CD8-positive, alpha-beta T cell (primary cell): ENCODE measurements at regions of chr17 and their contacts with region 1.

Region 1: DNA sequence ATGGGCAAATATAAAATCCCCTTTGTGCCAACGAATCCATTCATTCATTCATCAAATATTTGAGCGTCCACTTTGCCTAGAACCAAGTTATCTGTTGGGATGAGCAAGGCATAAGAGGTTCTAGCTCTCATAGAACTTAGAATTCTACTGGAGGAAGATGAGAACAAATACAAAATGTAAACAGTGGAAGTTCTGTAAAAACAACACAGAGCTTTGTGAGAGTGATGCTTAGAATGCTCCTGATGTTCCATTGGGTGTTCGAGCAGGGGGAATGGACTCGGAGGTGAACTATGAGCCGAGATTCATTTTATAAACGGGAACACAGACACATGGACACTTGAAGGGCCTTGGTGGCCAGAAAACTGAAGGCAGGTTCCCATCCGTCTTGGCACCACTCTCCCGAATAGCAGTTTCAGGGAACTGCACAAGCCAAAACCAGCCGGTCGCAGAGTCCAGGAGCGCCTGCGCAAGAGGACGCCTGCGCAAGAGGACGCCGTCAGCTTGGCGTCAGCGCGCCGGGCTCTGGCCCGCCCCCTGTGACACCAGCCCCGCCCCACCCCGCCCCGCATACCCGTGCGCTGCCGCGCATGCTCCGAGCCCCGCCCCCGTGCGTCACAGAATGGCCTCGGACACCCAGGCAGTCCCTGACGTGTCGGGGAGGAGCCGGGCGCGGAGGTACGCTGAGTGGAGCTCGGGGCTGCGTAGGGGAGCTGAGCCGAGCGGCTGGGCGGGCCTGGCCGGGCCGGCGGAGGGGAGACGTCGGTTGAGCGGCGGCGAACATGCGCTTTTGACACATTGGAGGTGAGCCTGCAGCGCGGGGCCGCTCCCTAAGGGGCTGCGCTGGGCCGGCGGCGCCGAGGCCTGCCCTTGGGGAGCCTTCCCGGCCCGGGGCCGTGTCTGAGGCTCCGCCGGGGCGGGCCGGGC is at the start of gene NDEL1:
- DNase-seq: peak; percentile 99
- ATAC-seq: peak; percentile 92
- H3K4me3 ChIP-seq: peak within 1 kb of the TSS; percentile 86 to 92
- H3K4me3 Mint-ChIP-seq: peak within 1 kb of the TSS; percentile 98
- H3K27ac ChIP-seq: peak within 1 kb of the TSS; percentile 98 to 100
- H3K27ac Mint-ChIP-seq: peak within 1 kb of the TSS; percentile 97
- H3K4me1 ChIP-seq: peaks cover 34% of the 10 kb centered on the region
- H3K4me1 Mint-ChIP-seq: peaks cover 42% of the 10 kb centered on the region
- H3K27me3 ChIP-seq: no peaks in the 10 kb centered on the region
- H3K27me3 Mint-ChIP-seq: no peaks in the 10 kb centered on the region
- CTCF ChIP-seq: no peak
- total RNA-seq, gene NDEL1: 266 to 279 TPM

Region 2: GRCh38 chr17:6651357-6651918 is 1784.1 kb before region 1 on chr17 and contains the starts of genes C17orf100 and MED31:
- CTCF ChIA-PET with region 1: no interaction called
- POLR2A ChIA-PET with region 1: no interaction called
- intact Hi-C with region 1: loop called in 1 of 2 experiments (anchors 5 kb)
- DNase-seq: peak; percentile 90 to 97 (median 94)
- ATAC-seq: peak; percentile 88
- H3K4me3 ChIP-seq: peak within 1 kb of the TSS; percentile 84 to 86
- H3K4me3 Mint-ChIP-seq: peak within 1 kb of the TSS; percentile 97
- H3K27ac ChIP-seq: peak within 1 kb of the TSS; percentile 99 to 100
- H3K27ac Mint-ChIP-seq: peak within 1 kb of the TSS; percentile 100
- H3K4me1 ChIP-seq: peaks cover 23% of the 10 kb centered on the region
- H3K4me1 Mint-ChIP-seq: peaks cover 69% of the 10 kb centered on the region
- H3K27me3 ChIP-seq: no peaks in the 10 kb centered on the region
- H3K27me3 Mint-ChIP-seq: no peaks in the 10 kb centered on the region
- CTCF ChIP-seq: no peak
- total RNA-seq, gene C17orf100: 0.39 to 0.73 TPM
- total RNA-seq, gene MED31: 21.4 to 25.6 TPM

Region 3: DNA sequence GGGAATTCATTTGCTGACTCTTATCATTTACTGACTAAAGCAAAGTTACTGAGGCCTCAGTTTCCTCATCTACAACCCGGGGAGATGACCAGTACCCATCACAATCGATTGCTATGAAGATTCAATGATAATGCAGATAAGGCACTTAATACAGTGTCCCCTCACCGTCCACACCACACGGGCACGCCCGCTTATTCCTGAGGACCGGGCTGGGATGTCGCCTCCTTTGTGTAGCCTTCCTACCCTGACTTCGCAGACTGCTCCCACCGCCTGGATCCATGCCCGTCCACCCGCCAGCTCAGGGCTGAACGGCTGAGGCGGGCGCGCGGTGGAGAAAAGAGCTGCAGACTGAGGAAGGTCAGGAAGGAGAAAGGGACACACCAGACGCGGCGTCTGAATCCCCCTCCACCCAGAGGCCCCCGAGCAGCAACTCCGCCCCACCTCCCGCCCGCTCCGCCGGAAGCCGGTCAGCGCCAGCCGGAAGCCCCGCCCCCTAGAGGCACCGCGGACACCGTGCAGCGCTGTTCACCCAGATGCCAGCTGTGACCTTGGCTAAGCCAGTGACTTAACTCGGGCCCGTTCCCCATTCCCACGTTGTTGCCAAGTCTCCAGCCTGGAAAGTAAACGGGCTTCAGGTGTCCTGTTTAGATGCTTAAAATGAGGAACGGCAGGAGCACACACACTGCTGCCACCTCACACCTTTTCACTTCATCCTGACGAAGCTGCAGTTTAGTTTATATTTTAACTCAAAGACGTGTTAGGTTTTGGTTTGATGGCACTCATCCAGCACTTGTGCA is 59.0 kb before region 1 on chr17 and contains the start of gene KRABD2:
- CTCF ChIA-PET with region 1: interaction called, 3 read pairs
- POLR2A ChIA-PET with region 1: interaction called, 10 read pairs
- intact Hi-C with region 1: loop called in 1 of 2 experiments (anchors 1 kb)
- DNase-seq: peak; percentile 81 to 93 (median 92)
- ATAC-seq: peak; percentile 100
- H3K4me3 ChIP-seq: peak within 1 kb of the TSS; percentile 71 to 91
- H3K4me3 Mint-ChIP-seq: peak within 1 kb of the TSS; percentile 90
- H3K27ac ChIP-seq: peak within 1 kb of the TSS; percentile 63 to 64
- H3K27ac Mint-ChIP-seq: peak within 1 kb of the TSS; percentile 88
- H3K4me1 ChIP-seq: peaks cover 35% of the 10 kb centered on the region
- H3K4me1 Mint-ChIP-seq: peaks cover 49% of the 10 kb centered on the region
- H3K27me3 ChIP-seq: no peaks in the 10 kb centered on the region
- H3K27me3 Mint-ChIP-seq: no peaks in the 10 kb centered on the region
- CTCF ChIP-seq: peak; percentile 47

Region 4: GRCh38 chr17:8393420-8394241 is 41.9 kb before region 1 on chr17:
- CTCF ChIA-PET with region 1: no interaction called
- POLR2A ChIA-PET with region 1: interaction called, 3 read pairs
- intact Hi-C with region 1: loop called in 1 of 2 experiments (anchors 1 kb)
- DNase-seq: peak in 8 of 9 experiments; percentile 15 to 89 (median 55)
- ATAC-seq: peak; percentile 99
- H3K4me3 ChIP-seq: no peak overlapping the region
- H3K4me3 Mint-ChIP-seq: peak overlapping the region; percentile 43
- H3K27ac ChIP-seq: peak overlapping the region; percentile 35 to 75
- H3K27ac Mint-ChIP-seq: peak overlapping the region; percentile 94
- H3K4me1 ChIP-seq: peaks cover 14% of the 10 kb centered on the region
- H3K4me1 Mint-ChIP-seq: peaks cover 15% of the 10 kb centered on the region
- H3K27me3 ChIP-seq: peaks cover 0 to 3% of the 10 kb centered on the region in 2 experiments
- H3K27me3 Mint-ChIP-seq: peaks cover 6% of the 10 kb centered on the region
- CTCF ChIP-seq: no peak

Region 5: DNA sequence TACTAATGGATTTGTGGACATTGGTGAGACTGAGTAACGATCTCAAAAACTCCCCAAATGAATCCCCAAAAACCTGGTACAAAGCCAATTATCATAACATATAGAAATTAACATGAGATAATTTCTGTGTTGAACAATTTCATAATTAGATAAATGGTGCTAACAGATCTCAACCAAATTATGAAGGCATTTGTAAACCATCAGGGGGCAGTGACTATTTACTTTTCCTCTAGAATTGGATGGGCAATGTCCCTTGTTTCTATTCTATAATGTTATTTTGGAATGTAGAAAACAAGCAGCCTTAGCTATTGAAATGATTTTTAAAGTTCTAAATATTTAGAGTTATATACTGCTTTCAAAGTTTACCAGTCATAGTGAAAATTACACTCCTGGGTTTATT is 137.3 kb after region 1 on chr17:
- CTCF ChIA-PET with region 1: no interaction called
- POLR2A ChIA-PET with region 1: no interaction called
- intact Hi-C with region 1: no loop called
- DNase-seq: peak in 2 of 9 experiments; percentile 3 to 20
- ATAC-seq: no peak
- H3K4me3 ChIP-seq: no peak overlapping the region
- H3K4me3 Mint-ChIP-seq: no peak overlapping the region
- H3K27ac ChIP-seq: no peak overlapping the region
- H3K27ac Mint-ChIP-seq: no peak overlapping the region
- H3K4me1 ChIP-seq: no peaks in the 10 kb centered on the region
- H3K4me1 Mint-ChIP-seq: no peaks in the 10 kb centered on the region
- H3K27me3 ChIP-seq: no peaks in the 10 kb centered on the region
- H3K27me3 Mint-ChIP-seq: peaks cover 3% of the 10 kb centered on the region
- CTCF ChIP-seq: no peak

Region 6: DNA sequence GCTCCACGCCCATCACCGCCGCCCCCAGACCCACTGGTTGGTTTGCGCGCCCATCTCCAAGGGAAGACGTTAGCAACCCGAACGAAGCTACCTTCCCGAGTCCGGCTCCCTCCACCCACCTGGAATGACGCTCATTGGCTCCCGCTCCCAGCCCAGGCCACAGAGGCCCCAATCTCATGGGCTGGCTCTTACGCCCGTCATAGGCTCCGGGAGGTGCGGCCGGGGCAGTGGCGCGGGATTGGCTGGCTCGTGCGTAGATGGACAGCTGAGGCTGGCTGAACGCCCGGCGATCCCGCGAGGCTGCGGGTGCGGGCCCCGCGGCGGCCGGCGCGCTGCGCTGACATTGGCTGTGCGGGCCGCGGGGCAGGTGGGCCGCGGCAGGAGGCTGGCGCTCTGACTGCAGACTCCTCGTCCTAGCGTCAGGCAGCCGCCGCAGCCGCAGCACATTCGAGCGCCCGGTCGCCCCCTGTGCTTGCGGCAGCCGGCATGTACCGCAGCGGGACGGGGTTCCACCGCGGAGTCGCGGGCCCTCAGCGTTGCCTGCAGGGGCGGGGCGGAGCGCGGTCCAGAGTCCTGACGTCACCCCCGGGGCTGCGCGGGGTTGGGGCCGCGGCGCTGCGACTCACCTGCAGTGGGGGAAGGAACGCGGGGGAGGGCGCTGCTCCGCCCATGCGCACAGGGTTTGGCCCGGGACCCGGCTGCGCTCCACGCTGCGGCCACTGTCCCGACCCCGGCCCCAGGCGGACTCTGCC is 195.5 kb after region 1 on chr17:
- CTCF ChIA-PET with region 1: no interaction called
- POLR2A ChIA-PET with region 1: no interaction called
- intact Hi-C with region 1: loop called (anchors 5 to 10 kb)
- DNase-seq: peak; percentile 50 to 93 (median 81)
- ATAC-seq: peak; percentile 87
- H3K4me3 ChIP-seq: peak overlapping the region; percentile 71 to 89
- H3K4me3 Mint-ChIP-seq: peak overlapping the region; percentile 98
- H3K27ac ChIP-seq: peak overlapping the region in 1 of 2 experiments; percentile 26
- H3K27ac Mint-ChIP-seq: peak overlapping the region; percentile 72
- H3K4me1 ChIP-seq: peaks cover 5% of the 10 kb centered on the region
- H3K4me1 Mint-ChIP-seq: peaks cover 15% of the 10 kb centered on the region
- H3K27me3 ChIP-seq: peaks cover 8 to 16% of the 10 kb centered on the region in 2 experiments
- H3K27me3 Mint-ChIP-seq: peaks cover 35% of the 10 kb centered on the region
- CTCF ChIP-seq: no peak

Region 7: GRCh38 chr17:8894673-8895578 is 459.4 kb after region 1 on chr17:
- CTCF ChIA-PET with region 1: no interaction called
- POLR2A ChIA-PET with region 1: no interaction called
- intact Hi-C with region 1: loop called (anchors 1 to 5 kb)
- DNase-seq: peak in 7 of 9 experiments; percentile 30 to 79 (median 60)
- ATAC-seq: peak; percentile 35
- H3K4me3 ChIP-seq: no peak overlapping the region
- H3K4me3 Mint-ChIP-seq: no peak overlapping the region
- H3K27ac ChIP-seq: no peak overlapping the region
- H3K27ac Mint-ChIP-seq: peak overlapping the region; percentile 29
- H3K4me1 ChIP-seq: peaks cover 56% of the 10 kb centered on the region
- H3K4me1 Mint-ChIP-seq: peaks cover 56% of the 10 kb centered on the region
- H3K27me3 ChIP-seq: no peaks in the 10 kb centered on the region
- H3K27me3 Mint-ChIP-seq: no peaks in the 10 kb centered on the region
- CTCF ChIP-seq: peak; percentile 76